Mammary epithelial cell (primary cell): ENCODE measurements at regions of chr22 and their contacts with region 1.

Region 1: DNA sequence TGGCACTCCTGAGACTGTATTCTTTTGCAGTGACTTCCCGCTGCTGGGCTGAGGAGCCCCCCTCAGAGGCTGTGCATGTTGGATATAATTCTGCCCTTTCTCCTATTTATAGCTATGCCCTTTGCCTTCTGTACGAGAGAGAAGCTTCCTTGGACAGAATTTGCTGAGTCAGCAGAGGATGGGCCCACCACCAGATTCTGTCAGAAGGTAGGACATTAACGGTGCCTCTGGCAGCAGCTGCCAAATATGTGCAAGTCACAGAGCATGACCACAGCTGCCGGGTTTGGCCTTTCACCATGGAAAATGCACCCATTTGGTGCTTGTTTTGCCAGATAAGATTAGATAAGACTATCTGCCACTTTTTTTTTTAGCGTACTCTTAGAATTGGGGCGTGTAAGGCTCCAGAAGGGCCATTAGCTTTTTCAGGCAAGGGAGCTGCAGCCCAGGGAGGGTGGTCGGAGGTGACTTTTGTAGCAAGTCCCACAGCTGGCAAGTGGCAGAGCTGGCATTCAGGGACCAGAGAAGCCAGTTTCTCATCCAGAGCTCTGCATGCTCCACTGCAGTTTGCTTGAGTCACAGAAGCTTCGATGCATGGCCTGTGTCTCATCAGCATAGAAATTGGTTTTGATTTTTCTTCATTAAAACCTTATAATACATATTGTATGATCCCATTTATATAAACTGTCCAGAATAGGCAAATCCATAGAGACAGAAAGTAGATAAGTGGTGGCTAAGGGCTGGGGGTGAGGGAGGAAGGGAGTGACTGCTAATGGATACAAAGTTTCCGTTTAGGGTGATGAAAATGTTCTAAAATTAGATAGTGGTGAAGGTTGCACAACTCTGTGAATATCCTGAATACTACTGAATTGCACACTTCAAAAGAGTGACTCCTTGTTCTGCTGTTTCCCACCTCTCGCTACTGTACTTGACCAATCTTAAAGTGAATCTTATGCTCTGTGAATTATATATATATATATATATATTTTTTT is 15.8 kb downstream of the UPB1 start:
- DNase-seq: peak; percentile 16
- H3K4me3 ChIP-seq: no peak overlapping the region
- H3K27ac ChIP-seq: no peak overlapping the region
- H3K4me1 ChIP-seq: peaks cover under 1% of the 10 kb centered on the region
- H3K27me3 ChIP-seq: no peaks in the 10 kb centered on the region
- CTCF ChIP-seq: no peak

Region 2: GRCh38 chr22:24353121-24353520 is 157.8 kb before region 1 on chr22:
- CTCF ChIA-PET with region 1: no interaction called
- dilution Hi-C with region 1: loop called (anchors 5 kb)
- in situ Hi-C with region 1: no loop called
- intact Hi-C with region 1: no loop called
- DNase-seq: no peak
- H3K4me3 ChIP-seq: no peak overlapping the region
- H3K27ac ChIP-seq: no peak overlapping the region
- H3K4me1 ChIP-seq: peaks cover 6% of the 10 kb centered on the region
- H3K27me3 ChIP-seq: no peaks in the 10 kb centered on the region
- CTCF ChIP-seq: no peak

Region 3: DNA sequence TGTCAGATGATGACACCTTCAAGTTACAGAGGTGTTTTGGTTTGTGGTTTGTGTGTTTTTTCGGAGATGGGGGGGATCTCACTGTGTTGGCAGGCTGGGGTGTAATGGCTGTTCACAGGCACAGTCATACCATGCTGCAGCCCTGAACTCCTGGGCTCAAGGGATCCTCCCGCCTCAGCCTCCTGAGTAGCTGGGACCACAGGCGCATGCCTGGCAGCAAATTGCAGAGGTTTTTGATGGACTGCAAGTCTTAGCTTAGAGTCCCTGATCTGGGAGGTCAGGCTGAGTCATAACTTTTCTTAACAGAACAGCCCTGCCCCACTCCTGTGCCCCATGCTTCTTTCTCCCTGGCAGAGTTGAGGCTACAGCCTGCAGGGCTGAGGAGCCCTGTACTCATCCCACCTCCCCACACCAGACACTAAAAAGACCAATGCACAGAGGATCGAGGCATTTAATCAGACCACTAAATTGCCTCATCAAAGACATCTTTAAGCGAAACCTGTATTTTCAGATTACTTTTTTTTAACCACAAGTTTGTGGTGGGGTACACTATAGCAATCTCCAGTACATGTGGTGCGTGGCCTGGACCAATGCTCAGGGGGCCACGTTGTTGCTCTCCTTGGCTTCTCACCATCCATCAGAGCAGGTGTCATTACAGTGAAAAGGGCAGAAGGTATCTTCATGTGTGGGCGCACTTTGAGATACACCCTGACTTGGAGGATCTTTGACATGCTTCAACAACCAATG is 100.6 kb before region 1 on chr22:
- CTCF ChIA-PET with region 1: no interaction called
- dilution Hi-C with region 1: loop called (anchors 5 kb)
- in situ Hi-C with region 1: no loop called
- intact Hi-C with region 1: no loop called
- DNase-seq: no peak
- H3K4me3 ChIP-seq: no peak overlapping the region
- H3K27ac ChIP-seq: no peak overlapping the region
- H3K4me1 ChIP-seq: peaks cover 17% of the 10 kb centered on the region
- H3K27me3 ChIP-seq: no peaks in the 10 kb centered on the region
- CTCF ChIP-seq: no peak

Region 4: DNA sequence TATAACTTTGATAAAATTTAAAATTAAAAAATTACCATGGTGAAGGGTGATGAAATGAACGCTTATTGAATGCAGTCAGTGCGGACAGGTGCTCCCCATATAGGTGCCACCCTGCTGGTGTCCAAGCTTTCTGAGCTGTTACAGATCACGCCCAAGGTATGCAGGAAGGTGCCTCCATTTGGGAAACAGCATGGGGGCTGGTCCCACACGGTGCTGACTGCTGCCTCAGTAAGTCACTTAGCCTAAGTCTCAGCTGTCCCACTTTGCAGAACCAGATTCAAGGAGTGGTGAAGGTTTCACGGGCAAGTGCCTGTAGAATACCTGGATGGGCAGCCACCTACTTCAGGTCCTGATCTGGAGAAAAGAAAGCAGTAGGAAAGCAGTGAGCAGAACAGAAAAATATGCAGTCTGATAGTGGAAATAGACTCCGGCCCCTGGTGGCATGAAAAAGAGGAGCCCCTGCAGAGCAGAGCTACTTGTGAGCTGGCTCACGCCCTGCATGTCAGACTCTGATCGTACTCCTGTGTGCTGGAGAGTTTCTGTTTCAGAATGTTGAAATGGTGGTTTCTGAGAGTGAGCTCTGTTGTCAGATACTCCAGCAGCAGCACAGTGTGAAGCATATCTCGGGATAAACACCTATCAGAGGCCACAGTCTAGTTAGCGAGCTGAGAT is 50.4 kb before region 1 on chr22:
- CTCF ChIA-PET with region 1: no interaction called
- dilution Hi-C with region 1: loop called (anchors 5 kb)
- in situ Hi-C with region 1: no loop called
- intact Hi-C with region 1: no loop called
- DNase-seq: no peak
- H3K4me3 ChIP-seq: no peak overlapping the region
- H3K27ac ChIP-seq: no peak overlapping the region
- H3K4me1 ChIP-seq: peaks cover 7% of the 10 kb centered on the region
- H3K27me3 ChIP-seq: no peaks in the 10 kb centered on the region
- CTCF ChIP-seq: no peak

Region 5: DNA sequence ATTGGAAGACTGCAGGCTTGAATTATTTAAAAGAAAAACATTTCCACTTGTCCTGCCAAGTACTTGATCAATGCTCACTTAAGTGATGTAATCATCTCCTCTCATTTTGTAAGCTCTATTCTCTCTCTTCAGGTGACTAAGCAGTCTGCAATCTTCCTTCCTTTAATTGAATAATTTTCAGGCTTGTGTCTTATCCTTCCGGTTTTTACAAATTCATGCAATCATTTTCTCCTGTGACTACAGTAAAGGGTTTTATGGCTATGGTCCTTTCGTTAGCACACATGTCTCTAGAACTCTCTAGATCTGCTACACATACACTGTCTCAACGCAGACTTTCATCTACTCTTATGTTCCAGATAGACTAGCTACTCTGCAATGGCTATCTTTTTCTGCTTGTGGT is 28.4 kb before region 1 on chr22:
- CTCF ChIA-PET with region 1: no interaction called
- dilution Hi-C with region 1: no loop called
- in situ Hi-C with region 1: no loop called
- intact Hi-C with region 1: no loop called
- DNase-seq: peak; percentile 77
- H3K4me3 ChIP-seq: no peak overlapping the region
- H3K27ac ChIP-seq: peak overlapping the region; percentile 56
- H3K4me1 ChIP-seq: peaks cover 54% of the 10 kb centered on the region
- H3K27me3 ChIP-seq: no peaks in the 10 kb centered on the region
- CTCF ChIP-seq: no peak

Region 6: DNA sequence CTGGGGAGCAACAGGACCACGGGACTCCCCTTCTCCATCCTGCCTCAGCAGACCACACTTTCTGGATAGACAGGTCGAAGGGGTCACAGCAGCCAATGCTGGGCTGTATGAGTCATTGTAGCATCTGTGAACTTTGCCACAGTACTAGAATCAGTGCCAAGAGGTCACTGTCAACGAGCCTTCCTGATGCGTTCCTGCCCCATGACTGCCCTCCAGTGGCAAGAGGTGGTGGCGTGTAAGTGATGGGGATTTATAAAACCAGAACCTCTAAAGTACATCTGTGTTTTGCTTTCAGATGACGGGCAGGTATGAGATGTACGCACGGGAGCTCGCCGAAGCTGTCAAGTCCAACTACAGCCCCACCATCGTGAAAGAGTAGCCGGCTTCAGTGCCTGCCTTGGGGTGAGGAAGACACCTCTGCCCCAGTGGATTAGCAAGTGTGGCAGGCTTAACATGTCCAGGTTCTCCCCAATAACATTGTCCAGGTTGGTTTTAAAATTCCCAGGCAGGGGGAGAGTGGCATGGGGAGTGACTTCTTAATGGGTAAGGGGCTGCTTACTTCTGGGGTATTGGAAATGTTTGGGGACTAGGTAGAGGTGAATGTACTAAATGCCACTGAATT is 14.6 kb after region 1 on chr22:
- CTCF ChIA-PET with region 1: no interaction called
- dilution Hi-C with region 1: no loop called
- in situ Hi-C with region 1: no loop called
- intact Hi-C with region 1: no loop called
- DNase-seq: peak; percentile 44
- H3K4me3 ChIP-seq: no peak overlapping the region
- H3K27ac ChIP-seq: no peak overlapping the region
- H3K4me1 ChIP-seq: peaks cover 4% of the 10 kb centered on the region
- H3K27me3 ChIP-seq: no peaks in the 10 kb centered on the region
- CTCF ChIP-seq: peak; percentile 89